ENCODE measurements at regions of chr11 and their contacts with region 1.

Region 1: DNA sequence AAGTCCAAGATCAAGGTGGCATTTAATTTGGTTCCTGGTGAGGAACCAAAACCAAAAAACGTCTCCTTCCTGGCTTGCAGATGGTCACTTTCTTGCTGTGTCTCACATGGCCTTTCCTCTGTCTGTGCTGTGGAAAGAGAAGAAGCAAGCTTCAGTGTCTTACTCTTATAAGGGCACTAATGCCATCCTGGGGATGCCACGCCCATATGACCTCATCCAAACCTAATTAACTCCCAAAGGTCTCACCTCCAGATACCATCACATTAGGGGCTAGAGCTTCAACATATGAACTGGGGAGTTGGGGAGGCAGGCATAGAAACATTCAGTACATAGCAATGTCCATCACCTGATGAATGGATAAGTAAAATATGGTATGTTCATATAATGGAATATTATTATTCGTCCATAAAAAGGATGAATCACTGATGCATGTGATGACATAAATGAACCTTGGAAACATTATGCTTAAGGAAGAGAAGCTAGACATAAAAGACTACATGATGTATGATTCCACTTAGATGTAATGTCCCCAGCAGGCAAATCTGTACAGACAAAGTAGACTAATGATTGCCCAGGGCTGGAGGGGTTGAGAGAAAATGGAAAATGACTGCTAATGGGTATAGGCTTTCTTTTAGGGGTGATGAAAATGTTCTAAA is 78.6 kb upstream of the B3GNT6 start:
- DNase-seq: no peak
- H3K4me3 ChIP-seq: no peak overlapping the region
- H3K27ac ChIP-seq: no peak overlapping the region
- H3K4me1 ChIP-seq: no peaks in the 10 kb centered on the region
- H3K27me3 ChIP-seq: no peaks in the 10 kb centered on the region
- CTCF ChIP-seq: no peak
- EP300 ChIP-seq: no peak
- POLR2A ChIP-seq: no peak

Region 2: DNA sequence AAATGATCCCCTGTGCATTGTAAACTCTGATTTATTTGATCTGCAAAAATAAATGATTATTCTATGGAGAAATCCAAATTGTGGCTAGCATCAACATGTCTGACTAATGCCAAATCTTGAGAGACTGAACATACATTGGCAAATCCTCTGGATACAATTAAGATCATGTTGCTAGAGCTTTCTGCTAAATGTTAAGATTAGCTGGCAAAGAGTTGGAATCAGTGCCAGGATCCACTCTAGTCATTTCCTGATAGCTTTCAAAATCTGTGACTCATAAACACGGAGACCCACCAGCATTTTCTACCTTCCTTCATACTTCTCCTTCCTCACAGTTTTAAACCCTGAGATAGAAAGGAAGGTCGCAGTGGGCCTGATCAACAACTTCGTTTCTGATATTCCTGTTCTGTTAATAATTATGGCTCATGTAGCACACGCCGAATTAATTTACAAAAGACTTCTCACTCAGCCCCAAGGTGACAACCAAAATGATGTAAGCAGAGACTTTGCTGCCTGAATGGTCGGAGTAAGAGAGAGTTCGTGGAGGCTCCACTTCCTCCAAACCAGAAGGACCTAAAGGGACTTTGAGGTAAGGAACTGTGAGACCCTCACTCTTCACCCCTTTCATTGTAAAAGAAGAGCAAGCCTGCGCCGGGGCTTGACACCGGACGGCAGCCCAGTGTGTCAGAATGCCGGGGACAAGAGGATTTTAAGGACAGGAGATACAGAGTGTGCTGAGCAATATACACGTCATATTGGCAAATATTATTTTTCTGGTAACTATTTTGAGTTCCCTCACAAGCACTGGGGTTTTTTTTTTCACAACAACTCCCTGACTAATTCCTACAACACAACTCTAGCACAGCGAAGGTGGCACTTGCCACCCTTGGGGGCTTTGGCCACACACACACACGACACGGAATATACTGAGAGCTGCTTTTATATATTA is 1351.5 kb before region 1 on chr11:
- intact Hi-C with region 1: loop called in 1 of 4 experiments (anchors 5 kb)
- DNase-seq: no peak
- H3K4me3 ChIP-seq: no peak overlapping the region
- H3K27ac ChIP-seq: no peak overlapping the region
- H3K4me1 ChIP-seq: no peaks in the 10 kb centered on the region
- H3K27me3 ChIP-seq: no peaks in the 10 kb centered on the region
- CTCF ChIP-seq: no peak
- EP300 ChIP-seq: no peak
- POLR2A ChIP-seq: no peak

Region 3: DNA sequence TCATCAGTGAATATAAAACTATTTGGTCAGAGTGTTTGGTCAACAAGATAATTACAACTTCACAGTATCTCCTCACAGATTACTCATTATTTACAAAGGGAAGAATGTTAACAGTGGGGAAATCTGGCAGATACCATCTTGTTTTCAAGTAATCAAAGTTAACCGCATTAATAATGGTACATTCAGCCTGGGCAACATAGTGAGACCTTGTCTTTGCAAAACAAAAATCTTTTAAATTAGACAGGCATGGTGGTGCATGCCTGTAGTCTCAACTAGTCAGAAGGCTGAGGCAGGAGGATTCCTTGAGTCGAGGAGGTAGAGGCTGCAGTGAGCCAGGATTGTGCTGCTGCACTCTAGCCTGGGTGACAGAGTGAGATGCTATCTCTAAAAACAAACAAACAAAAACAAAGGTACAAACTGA is 16.4 kb before region 1 on chr11:
- intact Hi-C with region 1: no loop called
- DNase-seq: no peak
- H3K4me3 ChIP-seq: no peak overlapping the region
- H3K27ac ChIP-seq: no peak overlapping the region
- H3K4me1 ChIP-seq: no peaks in the 10 kb centered on the region
- H3K27me3 ChIP-seq: no peaks in the 10 kb centered on the region
- CTCF ChIP-seq: no peak
- EP300 ChIP-seq: no peak
- POLR2A ChIP-seq: no peak

Measured in ovary (tissue), 10 donors.